Gastrocnemius medialis (tissue), 4 donors: ENCODE measurements at regions of chr13 and their contacts with region 1.

Region 1: GRCh38 chr13:41960639-41961465 is at the start of gene VWA8:
- DNase-seq: peak; percentile 58 to 82
- ATAC-seq: peak; percentile 85 to 86
- H3K4me3 ChIP-seq: peak within 1 kb of the TSS; percentile 83 to 92 (median 88)
- H3K27ac ChIP-seq: peak within 1 kb of the TSS; percentile 88 to 92 (median 90)
- H3K4me1 ChIP-seq: peaks cover 16 to 25% of the 10 kb centered on the region in 2 donors
- H3K27me3 ChIP-seq: no peaks in the 10 kb centered on the region
- CTCF ChIP-seq: no peak
- POLR2A ChIP-seq: no peak
- total RNA-seq, gene VWA8: 24.7 to 37.9 (median 29.7) TPM

Region 2: GRCh38 chr13:41742917-41743552 is 217.8 kb before region 1 on chr13:
- in situ Hi-C with region 1: no loop called
- intact Hi-C with region 1: loop called (anchors 10 kb)
- DNase-seq: no peak
- ATAC-seq: no peak
- H3K4me3 ChIP-seq: no peak overlapping the region
- H3K27ac ChIP-seq: no peak overlapping the region
- H3K4me1 ChIP-seq: peaks cover 0 to 11% of the 10 kb centered on the region in 2 donors
- H3K27me3 ChIP-seq: no peaks in the 10 kb centered on the region
- CTCF ChIP-seq: no peak
- POLR2A ChIP-seq: no peak

Region 3: GRCh38 chr13:41916173-41916954 is 44.5 kb before region 1 on chr13:
- in situ Hi-C with region 1: no loop called
- intact Hi-C with region 1: loop called (anchors 10 kb)
- DNase-seq: no peak
- ATAC-seq: peak; percentile 82 to 94
- H3K4me3 ChIP-seq: peak overlapping the region in 1 of 4 donors; percentile 4
- H3K27ac ChIP-seq: peak overlapping the region; percentile 50 to 77 (median 74)
- H3K4me1 ChIP-seq: peaks cover 59 to 63% of the 10 kb centered on the region in 2 donors
- H3K27me3 ChIP-seq: no peaks in the 10 kb centered on the region
- CTCF ChIP-seq: no peak
- POLR2A ChIP-seq: no peak

Region 4: GRCh38 chr13:42039946-42040729 is 79.3 kb after region 1 on chr13:
- in situ Hi-C with region 1: no loop called
- intact Hi-C with region 1: loop called (anchors 1 kb)
- DNase-seq: peak; percentile 89
- ATAC-seq: peak; percentile 84 to 86
- H3K4me3 ChIP-seq: peak overlapping the region; percentile 72 to 95 (median 80)
- H3K27ac ChIP-seq: peak overlapping the region; percentile 88 to 98 (median 92)
- H3K4me1 ChIP-seq: peaks cover 0 to 10% of the 10 kb centered on the region in 2 donors
- H3K27me3 ChIP-seq: no peaks in the 10 kb centered on the region
- CTCF ChIP-seq: peak in 1 of 5 experiments; percentile 18
- POLR2A ChIP-seq: peak; percentile 90 to 96